Tibial artery (tissue), 4 donors: ENCODE measurements at regions of chr22 and their contacts with region 1.

Region 1: GRCh38 chr22:28969401-28970168 is 86.2 kb downstream of the ZNRF3 start:
- DNase-seq: no peak
- H3K4me3 ChIP-seq: no peak overlapping the region
- H3K27ac ChIP-seq: no peak overlapping the region
- H3K4me1 ChIP-seq: no peaks in the 10 kb centered on the region
- H3K27me3 ChIP-seq: no peaks in the 10 kb centered on the region
- CTCF ChIP-seq: no peak

Region 2: GRCh38 chr22:28710112-28710511 is 259.5 kb before region 1 on chr22:
- intact Hi-C with region 1: no loop called
- DNase-seq: no peak
- H3K4me3 ChIP-seq: no peak overlapping the region
- H3K27ac ChIP-seq: peak overlapping the region in 1 of 2 donors; percentile 2
- H3K4me1 ChIP-seq: peaks cover 0 to 15% (median 5%) of the 10 kb centered on the region in 4 donors
- H3K27me3 ChIP-seq: no peaks in the 10 kb centered on the region
- CTCF ChIP-seq: no peak

Region 3: GRCh38 chr22:29011240-29012100 is 41.9 kb after region 1 on chr22:
- intact Hi-C with region 1: loop called (anchors 10 kb)
- DNase-seq: no peak
- H3K4me3 ChIP-seq: no peak overlapping the region
- H3K27ac ChIP-seq: peak overlapping the region; percentile 35 to 63
- H3K4me1 ChIP-seq: peaks cover 0 to 43% (median 21%) of the 10 kb centered on the region in 4 donors
- H3K27me3 ChIP-seq: no peaks in the 10 kb centered on the region
- CTCF ChIP-seq: no peak

Region 4: GRCh38 chr22:29156524-29156923 is 186.9 kb after region 1 on chr22:
- intact Hi-C with region 1: no loop called
- DNase-seq: peak in 1 of 2 donors; percentile 46
- H3K4me3 ChIP-seq: no peak overlapping the region
- H3K27ac ChIP-seq: no peak overlapping the region
- H3K4me1 ChIP-seq: peaks cover 0 to 16% (median 11%) of the 10 kb centered on the region in 4 donors
- H3K27me3 ChIP-seq: peaks cover 0 to 12% of the 10 kb centered on the region in 2 donors
- CTCF ChIP-seq: no peak